CD8-positive, alpha-beta memory T cell (primary cell): ENCODE measurements at regions of chr4 and their contacts with region 1.

Region 1: GRCh38 chr4:4248029-4248884 is at the start of gene TMEM128:
- DNase-seq: peak; percentile 88 to 95 (median 89)
- H3K4me3 ChIP-seq: peak within 1 kb of the TSS; percentile 74
- H3K4me3 Mint-ChIP-seq: peak within 1 kb of the TSS; percentile 95 to 99 (median 97)
- H3K27ac ChIP-seq: peak within 1 kb of the TSS; percentile 93
- H3K27ac Mint-ChIP-seq: peak within 1 kb of the TSS; percentile 97 to 99 (median 98)
- H3K4me1 ChIP-seq: peaks cover 16% of the 10 kb centered on the region
- H3K4me1 Mint-ChIP-seq: peaks cover 27 to 48% (median 44%) of the 10 kb centered on the region in 3 donors
- H3K27me3 ChIP-seq: no peaks in the 10 kb centered on the region
- H3K27me3 Mint-ChIP-seq: no peaks in the 10 kb centered on the region
- total RNA-seq, gene TMEM128: 24.1 to 26.6 TPM

Region 2: DNA sequence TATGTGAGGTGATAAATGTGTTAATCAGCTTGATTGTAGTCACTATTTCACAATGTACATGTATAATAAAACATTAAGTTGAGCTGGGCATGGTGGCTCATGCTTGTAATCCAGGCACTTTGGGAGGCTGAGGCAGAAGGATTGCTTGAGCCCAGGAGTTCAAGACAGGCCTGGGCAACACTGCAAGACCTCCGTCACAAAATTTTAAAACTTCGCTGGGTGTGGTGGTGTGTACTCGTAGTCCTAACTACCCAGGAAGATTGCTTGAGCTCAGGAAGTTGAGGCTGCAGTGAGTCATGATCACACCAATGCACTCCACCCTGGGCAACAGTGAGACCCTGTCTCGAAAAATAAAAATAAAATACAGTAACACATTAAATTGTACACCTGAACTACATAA is 21.6 kb after region 1 on chr4:
- CTCF ChIA-PET with region 1: interaction called, 10 read pairs
- POLR2A ChIA-PET with region 1: interaction called, 11 read pairs
- DNase-seq: peak in 4 of 5 donors; percentile 9 to 80 (median 43)
- H3K4me3 ChIP-seq: no peak overlapping the region
- H3K4me3 Mint-ChIP-seq: peak overlapping the region; percentile 83 to 95 (median 88)
- H3K27ac ChIP-seq: peak overlapping the region; percentile 100
- H3K27ac Mint-ChIP-seq: peak overlapping the region; percentile 87 to 99 (median 97)
- H3K4me1 ChIP-seq: peaks cover 25% of the 10 kb centered on the region
- H3K4me1 Mint-ChIP-seq: peaks cover 78 to 91% (median 87%) of the 10 kb centered on the region in 3 donors
- H3K27me3 ChIP-seq: no peaks in the 10 kb centered on the region
- H3K27me3 Mint-ChIP-seq: no peaks in the 10 kb centered on the region

Region 3: GRCh38 chr4:4289941-4290850 is 41.9 kb after region 1 on chr4 and contains the starts of genes LYAR and ZBTB49:
- CTCF ChIA-PET with region 1: no interaction called
- POLR2A ChIA-PET with region 1: interaction called, 10 read pairs
- DNase-seq: peak; percentile 96 to 98 (median 97)
- H3K4me3 ChIP-seq: peak within 1 kb of the TSS; percentile 97
- H3K4me3 Mint-ChIP-seq: peak within 1 kb of the TSS; percentile 93 to 99 (median 96)
- H3K27ac ChIP-seq: peak within 1 kb of the TSS; percentile 85
- H3K27ac Mint-ChIP-seq: peak within 1 kb of the TSS; percentile 90 to 98 (median 96)
- H3K4me1 ChIP-seq: peaks cover 35% of the 10 kb centered on the region
- H3K4me1 Mint-ChIP-seq: peaks cover 66 to 85% (median 75%) of the 10 kb centered on the region in 3 donors
- H3K27me3 ChIP-seq: no peaks in the 10 kb centered on the region
- H3K27me3 Mint-ChIP-seq: no peaks in the 10 kb centered on the region
- total RNA-seq, gene LYAR: 95.8 to 103 TPM
- total RNA-seq, gene ZBTB49: 7.9 to 8.7 TPM

Region 4: DNA sequence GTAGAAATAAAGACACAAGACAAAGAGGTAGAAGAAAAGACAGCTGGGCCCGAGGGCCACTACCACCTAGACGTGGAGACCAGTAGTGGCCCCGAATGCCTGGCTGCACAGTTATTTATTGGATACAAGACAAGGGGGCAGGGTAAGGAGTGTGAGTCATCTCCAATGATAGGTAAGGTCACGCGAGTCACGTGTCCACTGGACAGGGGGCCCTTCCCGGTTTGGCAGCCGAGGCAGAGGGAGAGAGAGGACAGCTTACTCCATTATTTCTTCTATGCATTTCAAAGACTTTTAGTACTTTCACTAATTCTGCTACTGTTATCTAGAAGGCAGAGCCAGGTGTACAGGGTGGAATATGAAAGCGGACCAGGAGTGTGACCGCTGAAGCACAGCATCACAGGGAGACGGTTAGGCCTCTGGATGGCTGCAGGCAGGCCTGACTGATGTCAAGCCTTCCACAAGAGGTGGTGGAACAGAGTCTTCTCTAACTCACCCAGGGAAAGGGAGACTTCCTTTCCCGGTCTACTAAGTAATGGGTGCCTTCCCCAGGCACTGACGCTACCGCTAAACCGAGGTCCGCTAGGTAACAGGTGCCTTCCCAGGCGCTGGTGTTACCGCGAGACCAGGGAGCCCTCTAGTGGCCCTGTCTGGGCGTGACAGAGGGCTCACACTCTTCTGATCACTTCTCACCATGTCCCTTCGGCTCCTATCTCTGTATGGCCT is 86.7 kb after region 1 on chr4:
- CTCF ChIA-PET with region 1: interaction called, 64 read pairs
- POLR2A ChIA-PET with region 1: no interaction called
- DNase-seq: peak; percentile 68 to 86 (median 73)
- H3K4me3 ChIP-seq: no peak overlapping the region
- H3K4me3 Mint-ChIP-seq: peak overlapping the region in 5 of 7 donors; percentile 30 to 79 (median 52)
- H3K27ac ChIP-seq: no peak overlapping the region
- H3K27ac Mint-ChIP-seq: peak overlapping the region in 5 of 8 donors; percentile 6 to 84 (median 62)
- H3K4me1 ChIP-seq: no peaks in the 10 kb centered on the region
- H3K4me1 Mint-ChIP-seq: peaks cover 8 to 16% (median 15%) of the 10 kb centered on the region in 3 donors
- H3K27me3 ChIP-seq: no peaks in the 10 kb centered on the region
- H3K27me3 Mint-ChIP-seq: no peaks in the 10 kb centered on the region

Region 5: DNA sequence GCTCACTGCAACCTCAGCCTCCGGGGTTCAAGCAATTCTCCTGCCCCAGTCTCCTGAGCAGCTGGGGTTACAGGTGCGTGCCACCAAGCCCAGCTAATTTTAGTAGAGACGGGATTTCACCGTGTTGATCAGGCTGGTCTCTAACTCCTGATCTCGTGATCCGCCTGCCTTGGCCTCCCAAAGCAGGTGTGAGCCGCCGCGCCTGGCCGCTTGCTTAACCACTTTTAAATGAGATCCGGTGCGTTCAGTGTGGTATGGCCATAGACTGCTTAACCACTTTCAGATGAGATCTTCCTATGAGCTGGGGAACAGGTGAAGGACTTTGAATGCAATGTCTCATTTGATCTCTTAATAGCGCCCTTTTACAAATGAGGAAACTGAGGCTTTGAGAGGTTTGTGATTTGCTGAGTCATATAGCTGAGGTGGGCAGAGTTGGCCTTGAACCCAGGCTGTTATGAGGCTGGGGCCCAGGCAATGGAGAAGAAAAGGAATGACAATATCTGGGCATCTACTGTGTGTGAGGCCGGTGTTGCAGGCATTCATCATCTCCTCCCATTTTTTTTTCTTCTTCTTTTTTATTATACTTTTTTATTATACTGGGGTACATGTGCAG is 96.8 kb after region 1 on chr4:
- CTCF ChIA-PET with region 1: interaction called, 64 read pairs
- POLR2A ChIA-PET with region 1: interaction called, 10 read pairs
- DNase-seq: no peak
- H3K4me3 ChIP-seq: no peak overlapping the region
- H3K4me3 Mint-ChIP-seq: no peak overlapping the region
- H3K27ac ChIP-seq: no peak overlapping the region
- H3K27ac Mint-ChIP-seq: peak overlapping the region in 1 of 8 donors; percentile 37
- H3K4me1 ChIP-seq: peaks cover 22% of the 10 kb centered on the region
- H3K4me1 Mint-ChIP-seq: peaks cover 23 to 52% (median 38%) of the 10 kb centered on the region in 3 donors
- H3K27me3 ChIP-seq: no peaks in the 10 kb centered on the region
- H3K27me3 Mint-ChIP-seq: peaks cover 0 to 7% of the 10 kb centered on the region in 2 donors

Region 6: DNA sequence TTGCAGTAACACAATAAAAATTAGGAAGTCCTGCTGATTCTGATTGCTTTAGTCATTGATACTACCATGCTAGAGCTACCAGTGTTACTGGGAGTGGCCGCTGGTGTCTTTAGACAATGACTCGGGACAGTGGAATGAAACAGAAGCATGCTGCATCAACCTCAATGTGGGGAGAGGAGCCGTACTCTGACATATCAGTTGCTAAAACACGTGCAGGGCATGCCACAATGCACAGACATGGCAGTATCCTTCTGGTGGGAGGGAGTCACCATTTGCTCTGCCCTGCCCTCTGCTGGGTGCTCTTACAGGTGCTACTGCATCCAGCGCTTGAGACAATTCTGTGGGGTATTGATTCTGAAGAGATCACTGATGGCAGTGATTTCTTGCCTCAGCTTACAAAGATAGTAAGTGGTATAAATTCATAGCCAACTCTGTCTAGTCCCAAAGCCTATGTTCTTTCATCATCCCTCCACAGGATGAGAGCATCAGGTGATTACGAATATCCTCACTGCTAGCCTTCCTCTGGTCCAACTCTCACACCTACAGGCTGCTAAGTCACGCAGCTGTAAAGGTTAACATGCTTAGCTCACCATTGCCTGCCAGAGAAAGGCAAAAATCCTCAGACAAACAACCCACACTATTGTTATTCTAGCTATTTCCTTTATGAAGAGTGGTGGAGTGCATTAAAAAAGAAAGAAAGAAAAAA is 182.4 kb after region 1 on chr4:
- CTCF ChIA-PET with region 1: interaction called, 16 read pairs
- POLR2A ChIA-PET with region 1: no interaction called
- DNase-seq: peak; percentile 26 to 75 (median 35)
- H3K4me3 ChIP-seq: no peak overlapping the region
- H3K4me3 Mint-ChIP-seq: no peak overlapping the region
- H3K27ac ChIP-seq: no peak overlapping the region
- H3K27ac Mint-ChIP-seq: peak overlapping the region in 3 of 8 donors; percentile 2 to 54 (median 25)
- H3K4me1 ChIP-seq: no peaks in the 10 kb centered on the region
- H3K4me1 Mint-ChIP-seq: peaks cover 6 to 8% (median 7%) of the 10 kb centered on the region in 3 donors
- H3K27me3 ChIP-seq: no peaks in the 10 kb centered on the region
- H3K27me3 Mint-ChIP-seq: no peaks in the 10 kb centered on the region